ENCODE measurements at regions of chr12 and their contacts with region 1.

Region 1: DNA sequence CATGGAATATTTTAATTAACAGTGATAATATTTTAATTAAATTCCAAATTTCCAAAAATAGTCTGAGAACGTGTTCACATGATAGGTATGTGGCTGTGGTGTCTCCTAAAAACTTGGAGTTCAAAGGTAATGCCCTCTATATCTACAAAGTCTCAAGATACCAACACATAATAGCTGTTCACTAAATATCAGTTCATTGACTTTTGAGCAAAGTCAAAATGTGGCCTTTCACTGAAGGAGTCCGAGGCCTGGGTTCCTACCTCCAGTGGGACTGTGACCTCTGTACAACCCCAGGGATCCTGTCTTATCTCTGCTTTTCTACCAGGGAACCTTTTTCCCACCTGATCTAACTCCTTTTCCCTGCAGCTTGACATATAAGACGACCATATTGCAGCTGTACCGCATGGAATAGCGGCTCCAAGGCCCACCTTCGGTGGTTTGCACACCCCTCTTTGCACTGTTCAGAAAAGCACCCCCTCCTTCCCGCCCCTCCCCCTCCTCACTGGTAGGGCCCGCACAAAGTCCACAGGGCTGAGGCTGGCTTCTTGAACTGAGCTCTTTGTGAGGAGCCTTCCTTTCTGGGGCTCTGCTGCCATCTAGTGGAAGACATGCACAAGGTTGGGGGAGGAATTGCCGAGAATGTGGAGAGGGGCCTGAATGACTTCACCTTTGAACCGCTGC is 3.1 kb downstream of the CCND2 start:
- DNase-seq: peak in 3 of 4 donors; percentile 88 to 95 (median 89)
- ATAC-seq: peak; percentile 66
- H3K4me3 ChIP-seq: peak overlapping the region in 1 of 2 donors; percentile 64
- H3K27ac ChIP-seq: peak overlapping the region in 1 of 2 donors; percentile 94
- H3K4me1 ChIP-seq: peaks cover 34 to 92% of the 10 kb centered on the region in 2 donors
- H3K27me3 ChIP-seq: peaks cover 0 to 47% of the 10 kb centered on the region in 2 donors
- CTCF ChIP-seq: peak; percentile 68 to 88

Region 2: DNA sequence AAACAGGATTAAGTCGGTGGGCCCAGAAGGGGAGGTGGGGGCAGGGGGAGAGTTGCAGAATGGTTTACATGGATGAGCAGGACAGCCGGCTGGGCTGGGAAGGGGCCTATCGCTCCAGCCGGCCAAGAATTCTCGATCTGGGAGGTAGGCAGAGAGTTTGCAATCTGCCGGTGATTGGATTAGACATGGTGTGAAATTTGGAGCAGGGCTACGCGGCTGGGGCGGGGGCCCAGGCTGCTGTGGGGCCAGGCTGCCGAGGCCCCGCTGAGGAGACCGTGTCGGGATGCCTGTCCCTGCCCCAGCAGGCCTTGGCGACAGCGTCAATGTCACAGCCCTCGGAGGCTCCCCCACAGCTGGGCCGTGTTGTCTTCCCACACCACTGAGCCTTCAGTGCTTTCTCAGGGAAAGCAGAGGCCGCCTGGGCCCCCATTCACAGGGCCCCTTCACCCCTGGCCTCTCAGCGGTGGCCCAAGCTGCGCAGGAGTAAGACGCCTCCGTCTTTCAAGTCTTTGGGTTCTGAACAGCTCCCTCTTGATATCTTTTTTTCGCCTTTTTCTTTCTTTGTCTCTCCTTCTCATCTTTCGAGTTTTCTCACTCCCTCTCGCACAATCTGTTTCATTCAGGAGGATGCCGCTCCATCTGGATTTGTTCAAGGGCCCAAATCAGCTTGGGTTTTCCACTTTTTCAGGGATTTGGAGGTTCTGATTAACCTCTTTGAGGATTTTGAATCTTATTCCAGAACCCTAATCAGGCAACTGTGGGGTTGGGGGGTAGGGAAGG is 286.0 kb before region 1 on chr12:
- intact Hi-C with region 1: loop called in 1 of 2 experiments (anchors 5 kb)
- DNase-seq: peak in 1 of 4 donors; percentile 56
- ATAC-seq: no peak
- H3K4me3 ChIP-seq: no peak overlapping the region
- H3K27ac ChIP-seq: no peak overlapping the region
- H3K4me1 ChIP-seq: no peaks in the 10 kb centered on the region
- H3K27me3 ChIP-seq: peaks cover 0 to 23% of the 10 kb centered on the region in 2 donors
- CTCF ChIP-seq: no peak

Region 3: DNA sequence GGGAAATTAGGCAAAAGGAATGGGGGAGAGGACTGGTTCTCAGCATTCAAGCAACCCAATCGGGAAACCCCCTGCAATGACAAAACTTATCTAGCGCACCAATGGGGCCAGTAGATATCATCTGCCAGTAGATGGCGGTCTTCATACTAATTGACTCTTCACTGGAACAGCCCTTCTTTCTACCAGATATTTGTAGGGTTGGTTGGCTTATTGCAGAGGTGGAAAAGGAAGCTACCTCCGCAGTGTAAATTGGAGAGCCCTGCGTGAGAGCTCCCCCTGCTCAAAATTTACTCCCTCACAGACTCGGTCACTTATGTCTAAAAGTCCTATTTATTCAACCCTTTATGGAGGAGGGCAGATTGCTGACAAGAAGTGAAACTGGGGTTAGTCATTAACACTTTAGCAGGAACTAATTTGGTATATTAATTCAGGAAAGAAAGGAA is 169.2 kb before region 1 on chr12:
- intact Hi-C with region 1: loop called in 1 of 2 experiments (anchors 5 kb)
- DNase-seq: peak in 2 of 4 donors; percentile 42 to 61
- ATAC-seq: peak; percentile 96
- H3K4me3 ChIP-seq: no peak overlapping the region
- H3K27ac ChIP-seq: no peak overlapping the region
- H3K4me1 ChIP-seq: peaks cover 0 to 6% of the 10 kb centered on the region in 2 donors
- H3K27me3 ChIP-seq: peaks cover 0 to 13% of the 10 kb centered on the region in 2 donors
- CTCF ChIP-seq: peak; percentile 59 to 79

Region 4: GRCh38 chr12:4663971-4664505 is 387.4 kb after region 1 on chr12:
- intact Hi-C with region 1: no loop called
- DNase-seq: no peak
- ATAC-seq: no peak
- H3K4me3 ChIP-seq: no peak overlapping the region
- H3K27ac ChIP-seq: no peak overlapping the region
- H3K4me1 ChIP-seq: no peaks in the 10 kb centered on the region
- H3K27me3 ChIP-seq: no peaks in the 10 kb centered on the region
- CTCF ChIP-seq: no peak